ENCODE measurements at regions of chr10 and their contacts with region 1.

Region 1: GRCh38 chr10:52215745-52216361 is 98.2 kb upstream of the DKK1 start:
- DNase-seq: peak; percentile 57
- H3K4me3 Mint-ChIP-seq: no peak overlapping the region
- H3K27ac Mint-ChIP-seq: no peak overlapping the region
- H3K4me1 Mint-ChIP-seq: peaks cover 7% of the 10 kb centered on the region
- H3K27me3 Mint-ChIP-seq: no peaks in the 10 kb centered on the region
- CTCF ChIP-seq: peak; percentile 56

Region 2: GRCh38 chr10:51001587-51001986 is 1214.3 kb before region 1 on chr10:
- CTCF ChIA-PET with region 1: no interaction called
- intact Hi-C with region 1: loop called (anchors 5 kb)
- DNase-seq: no peak
- H3K4me3 Mint-ChIP-seq: no peak overlapping the region
- H3K27ac Mint-ChIP-seq: no peak overlapping the region
- H3K4me1 Mint-ChIP-seq: no peaks in the 10 kb centered on the region
- H3K27me3 Mint-ChIP-seq: no peaks in the 10 kb centered on the region
- CTCF ChIP-seq: peak; percentile 28

Region 3: GRCh38 chr10:51063659-51064535 is 1152.0 kb before region 1 on chr10:
- CTCF ChIA-PET with region 1: no interaction called
- intact Hi-C with region 1: loop called (anchors 5 kb)
- DNase-seq: no peak
- H3K4me3 Mint-ChIP-seq: no peak overlapping the region
- H3K27ac Mint-ChIP-seq: no peak overlapping the region
- H3K4me1 Mint-ChIP-seq: no peaks in the 10 kb centered on the region
- H3K27me3 Mint-ChIP-seq: no peaks in the 10 kb centered on the region
- CTCF ChIP-seq: peak; percentile 44

Region 4: DNA sequence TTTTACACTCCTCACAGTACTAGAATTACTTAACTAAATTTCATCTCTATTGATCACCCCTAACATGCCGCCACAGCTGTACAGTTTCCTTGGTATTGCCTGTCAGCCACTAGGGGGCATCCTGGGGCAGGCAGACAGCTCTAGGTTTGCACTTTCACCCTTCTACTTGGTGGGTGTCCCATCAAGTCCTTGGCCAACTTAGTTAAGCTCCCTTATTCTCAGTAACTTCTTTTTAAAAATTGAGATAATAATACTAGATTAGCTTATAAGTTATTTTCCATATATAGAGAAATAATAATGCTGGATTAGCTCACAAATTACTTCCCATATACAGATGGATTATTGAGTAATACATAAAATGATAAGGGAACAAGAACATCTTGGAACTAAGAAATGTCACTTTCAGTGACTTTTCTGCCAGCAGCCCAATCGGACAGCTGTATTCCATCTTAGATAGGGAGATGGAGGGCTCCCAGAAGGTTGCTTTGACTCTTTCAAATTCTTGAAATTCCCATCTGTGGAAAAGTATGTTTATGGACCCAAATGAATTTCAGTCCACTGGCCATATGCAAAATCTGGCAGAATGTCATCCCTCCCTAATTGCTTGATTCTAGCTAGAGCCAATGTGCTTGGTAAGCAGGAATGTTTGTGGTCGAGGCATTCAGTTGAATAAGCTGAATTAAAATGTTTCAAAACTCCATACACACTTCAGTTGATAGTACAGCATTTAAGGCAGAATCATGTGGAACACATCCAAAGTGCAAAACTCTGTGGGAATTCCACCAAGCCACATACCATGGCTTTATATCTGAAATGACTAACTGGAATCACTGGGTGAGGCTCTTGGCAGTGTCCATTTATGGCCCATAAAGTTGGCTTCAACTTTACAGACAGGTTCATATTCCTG is 826.2 kb before region 1 on chr10:
- CTCF ChIA-PET with region 1: no interaction called
- intact Hi-C with region 1: loop called (anchors 10 kb)
- DNase-seq: peak; percentile 54
- H3K4me3 Mint-ChIP-seq: no peak overlapping the region
- H3K27ac Mint-ChIP-seq: no peak overlapping the region
- H3K4me1 Mint-ChIP-seq: no peaks in the 10 kb centered on the region
- H3K27me3 Mint-ChIP-seq: no peaks in the 10 kb centered on the region
- CTCF ChIP-seq: peak; percentile 65

Region 5: DNA sequence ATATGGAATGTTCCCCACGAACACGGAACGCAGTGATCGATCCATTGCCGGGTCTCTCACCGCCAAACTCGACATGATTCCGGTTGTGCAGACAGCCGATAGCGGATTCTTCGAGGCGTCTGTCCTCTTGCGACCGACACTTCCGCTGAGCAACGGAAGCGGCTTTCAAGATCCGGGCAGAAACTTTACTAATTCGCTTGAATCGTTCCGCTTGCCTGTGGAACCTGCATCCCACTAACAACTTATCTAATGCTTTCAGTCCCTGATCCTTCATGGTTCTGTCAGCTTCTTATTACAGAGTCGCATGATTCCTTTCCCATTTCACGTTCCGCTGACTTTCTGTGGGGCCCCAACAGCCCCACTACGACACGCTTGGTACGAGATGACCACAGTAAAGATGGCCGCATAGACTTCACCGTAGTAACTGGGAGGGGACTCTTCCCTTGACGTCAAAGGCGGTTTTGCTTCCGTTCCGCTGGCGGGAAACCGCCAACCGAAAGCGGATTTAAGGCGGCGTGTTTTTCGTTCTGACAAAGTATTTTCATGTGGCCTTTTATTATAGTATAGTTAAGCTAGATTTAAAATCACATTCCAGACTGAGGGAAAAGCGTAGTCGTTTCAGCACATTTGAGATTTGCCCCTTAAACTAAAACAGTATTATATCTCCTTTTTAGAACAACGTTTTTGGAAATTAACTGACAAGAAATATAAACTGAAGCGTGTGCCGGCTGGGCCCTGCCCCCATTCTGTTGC is 516.2 kb before region 1 on chr10 and contains the start of gene CSTF2T:
- CTCF ChIA-PET with region 1: no interaction called
- intact Hi-C with region 1: loop called (anchors 10 kb)
- DNase-seq: peak; percentile 82
- H3K4me3 Mint-ChIP-seq: peak within 1 kb of the TSS; percentile 94
- H3K27ac Mint-ChIP-seq: peak within 1 kb of the TSS; percentile 98
- H3K4me1 Mint-ChIP-seq: peaks cover 11% of the 10 kb centered on the region
- H3K27me3 Mint-ChIP-seq: no peaks in the 10 kb centered on the region
- CTCF ChIP-seq: no peak
- total RNA-seq, gene CSTF2T: 30.6 and 32.3 TPM in 2 replicates

Region 6: DNA sequence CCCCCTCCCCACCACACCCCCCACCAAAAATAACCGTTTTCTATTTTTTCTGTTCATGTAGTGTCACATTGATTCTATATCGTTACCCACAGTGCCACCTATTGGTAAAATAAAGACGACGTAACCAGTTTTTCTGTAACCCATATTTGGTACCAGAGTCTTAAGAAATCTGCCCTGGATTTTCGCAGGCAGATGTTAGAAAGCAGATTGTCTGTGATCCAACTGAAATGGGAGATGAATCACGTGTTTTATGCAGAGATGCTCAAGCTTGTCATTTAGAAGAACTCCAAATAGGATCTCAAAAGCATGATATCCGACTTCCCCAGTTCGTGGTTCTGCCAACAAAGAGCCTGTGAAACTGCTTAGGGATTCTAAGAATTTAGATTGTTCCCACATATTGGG is 255.4 kb before region 1 on chr10:
- CTCF ChIA-PET with region 1: no interaction called
- intact Hi-C with region 1: loop called (anchors 10 kb)
- DNase-seq: peak; percentile 6
- H3K4me3 Mint-ChIP-seq: no peak overlapping the region
- H3K27ac Mint-ChIP-seq: no peak overlapping the region
- H3K4me1 Mint-ChIP-seq: no peaks in the 10 kb centered on the region
- H3K27me3 Mint-ChIP-seq: peaks cover 24% of the 10 kb centered on the region
- CTCF ChIP-seq: no peak

Region 7: GRCh38 chr10:52004342-52004949 is 211.4 kb before region 1 on chr10:
- CTCF ChIA-PET with region 1: no interaction called
- intact Hi-C with region 1: loop called (anchors 5 kb)
- DNase-seq: peak; percentile 6
- H3K4me3 Mint-ChIP-seq: no peak overlapping the region
- H3K27ac Mint-ChIP-seq: no peak overlapping the region
- H3K4me1 Mint-ChIP-seq: no peaks in the 10 kb centered on the region
- H3K27me3 Mint-ChIP-seq: peaks cover 37% of the 10 kb centered on the region
- CTCF ChIP-seq: peak; percentile 34

Measured in Calu3 (cell line).